Common myeloid progenitor, CD34-positive (primary cell): ENCODE measurements at regions of chr3 and their contacts with region 1.

Region 1: GRCh38 chr3:114827495-114827894 is 319.6 kb downstream of the ZBTB20 start:
- DNase-seq: peak; percentile 86 to 89 (median 88)
- H3K4me3 ChIP-seq: no peak overlapping the region
- H3K27ac ChIP-seq: no peak overlapping the region
- H3K4me1 ChIP-seq: peaks cover 0 to 6% (median 0%) of the 10 kb centered on the region in 4 experiments
- H3K27me3 ChIP-seq: no peaks in the 10 kb centered on the region

Region 2: GRCh38 chr3:114770874-114771273 is 56.6 kb before region 1 on chr3:
- CTCF ChIA-PET with region 1: no interaction called
- POLR2A ChIA-PET with region 1: no interaction called
- DNase-seq: no peak
- H3K4me3 ChIP-seq: no peak overlapping the region
- H3K27ac ChIP-seq: no peak overlapping the region
- H3K4me1 ChIP-seq: no peaks in the 10 kb centered on the region
- H3K27me3 ChIP-seq: no peaks in the 10 kb centered on the region

Region 3: GRCh38 chr3:114841515-114841914 is 14.0 kb after region 1 on chr3:
- CTCF ChIA-PET with region 1: interaction called, 10 read pairs
- POLR2A ChIA-PET with region 1: no interaction called
- DNase-seq: no peak
- H3K4me3 ChIP-seq: no peak overlapping the region
- H3K27ac ChIP-seq: no peak overlapping the region
- H3K4me1 ChIP-seq: no peaks in the 10 kb centered on the region
- H3K27me3 ChIP-seq: no peaks in the 10 kb centered on the region

Region 4: DNA sequence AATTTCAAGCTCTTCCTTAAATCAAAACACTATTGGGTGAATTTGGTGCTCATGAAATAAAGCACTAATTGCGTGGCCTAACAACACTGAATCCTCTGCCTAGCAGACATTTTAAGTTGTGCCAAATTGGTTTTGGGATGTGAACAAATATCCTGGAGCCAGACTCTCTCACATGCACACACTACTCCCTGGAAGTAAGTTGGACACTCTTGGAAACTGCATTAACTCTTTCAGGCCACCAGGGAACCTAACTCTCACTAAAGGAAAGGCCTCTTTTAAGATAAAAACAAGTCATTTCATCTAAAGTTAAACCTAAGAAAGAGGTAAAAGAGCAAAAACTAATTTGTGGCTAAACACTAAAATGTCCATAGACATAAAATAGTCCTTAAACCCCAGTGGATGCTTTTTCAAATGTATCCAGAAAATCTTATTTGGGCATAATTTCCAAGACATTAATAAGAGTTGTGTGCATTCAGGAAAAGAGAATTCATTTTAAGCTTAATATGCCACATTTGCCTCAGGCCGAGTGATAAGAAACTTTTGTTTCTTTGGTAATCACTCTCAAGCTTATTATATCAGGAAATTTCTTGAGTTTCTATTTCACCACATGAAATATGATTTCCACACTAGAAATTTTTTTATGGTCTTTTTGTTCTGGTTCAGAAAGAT is 257.8 kb after region 1 on chr3:
- CTCF ChIA-PET with region 1: interaction called, 10 read pairs
- POLR2A ChIA-PET with region 1: no interaction called
- DNase-seq: peak in 1 of 3 donors; percentile 52
- H3K4me3 ChIP-seq: no peak overlapping the region
- H3K27ac ChIP-seq: no peak overlapping the region
- H3K4me1 ChIP-seq: peaks cover 0 to 16% (median 2%) of the 10 kb centered on the region in 4 experiments
- H3K27me3 ChIP-seq: no peaks in the 10 kb centered on the region

Region 5: GRCh38 chr3:115092220-115092791 is 264.8 kb after region 1 on chr3:
- CTCF ChIA-PET with region 1: interaction called, 14 read pairs
- POLR2A ChIA-PET with region 1: no interaction called
- DNase-seq: peak; percentile 84 to 86 (median 85)
- H3K4me3 ChIP-seq: no peak overlapping the region
- H3K27ac ChIP-seq: no peak overlapping the region
- H3K4me1 ChIP-seq: peaks cover 0 to 26% (median 5%) of the 10 kb centered on the region in 4 experiments
- H3K27me3 ChIP-seq: no peaks in the 10 kb centered on the region

Region 6: GRCh38 chr3:115169808-115170207 is 342.3 kb after region 1 on chr3:
- CTCF ChIA-PET with region 1: interaction called, 15 read pairs
- POLR2A ChIA-PET with region 1: no interaction called
- DNase-seq: peak in 2 of 3 donors; percentile 37 to 40
- H3K4me3 ChIP-seq: no peak overlapping the region
- H3K27ac ChIP-seq: no peak overlapping the region
- H3K4me1 ChIP-seq: peaks cover 0 to 11% (median 3%) of the 10 kb centered on the region in 4 experiments
- H3K27me3 ChIP-seq: no peaks in the 10 kb centered on the region